ENCODE measurements at regions of chr15 and their contacts with region 1.

Region 1: DNA sequence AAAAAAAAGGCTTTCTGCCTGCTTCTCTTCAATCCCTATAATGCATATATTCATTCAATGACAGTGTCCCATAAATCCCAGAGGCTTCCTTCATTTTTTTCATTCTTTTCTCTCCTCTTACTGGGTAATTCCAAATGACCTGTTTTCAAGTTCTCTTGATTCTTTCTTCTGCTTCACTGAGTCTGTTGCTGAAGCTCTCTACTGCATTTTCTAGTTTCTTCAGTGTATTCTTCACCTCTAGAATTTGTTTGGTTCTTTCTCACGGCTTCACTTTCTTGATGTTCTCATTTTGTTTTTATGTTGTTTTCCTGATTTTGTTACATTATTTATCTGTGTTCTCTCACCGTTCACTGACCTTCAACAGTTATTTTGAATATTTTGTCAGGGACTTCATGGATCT is 141.6 kb downstream of the SCAPER start:
- DNase-seq: no peak
- H3K4me3 ChIP-seq: no peak overlapping the region
- H3K27ac ChIP-seq: no peak overlapping the region
- H3K4me1 ChIP-seq: no peaks in the 10 kb centered on the region
- H3K27me3 ChIP-seq: no peaks in the 10 kb centered on the region
- CTCF ChIP-seq: no peak

Region 2: DNA sequence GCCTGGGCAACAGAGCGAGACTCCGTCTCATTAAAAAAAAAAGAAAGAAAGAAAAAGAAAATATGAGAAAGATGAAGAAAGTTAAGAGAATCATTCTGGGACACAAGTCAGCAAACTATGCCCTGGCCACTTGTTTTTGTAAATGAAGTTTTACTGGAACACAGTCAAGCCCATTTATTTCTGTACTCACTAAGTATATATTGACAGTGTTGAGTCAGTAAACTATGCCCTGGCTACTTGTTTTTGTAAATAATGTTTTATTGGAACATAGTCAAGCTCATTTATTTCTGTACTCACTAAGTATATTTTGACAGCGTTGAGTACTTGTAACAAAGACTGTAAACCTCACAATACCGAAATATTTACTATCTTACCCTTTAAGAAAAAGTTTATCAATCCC is 1269.8 kb before region 1 on chr15:
- CTCF ChIA-PET with region 1: no interaction called
- POLR2A ChIA-PET with region 1: no interaction called
- intact Hi-C with region 1: no loop called
- DNase-seq: no peak
- H3K4me3 ChIP-seq: no peak overlapping the region
- H3K27ac ChIP-seq: no peak overlapping the region
- H3K4me1 ChIP-seq: no peaks in the 10 kb centered on the region
- H3K27me3 ChIP-seq: no peaks in the 10 kb centered on the region
- CTCF ChIP-seq: no peak

Region 3: GRCh38 chr15:77107531-77108355 is 344.2 kb after region 1 on chr15:
- CTCF ChIA-PET with region 1: no interaction called
- POLR2A ChIA-PET with region 1: no interaction called
- intact Hi-C with region 1: no loop called
- DNase-seq: peak in 1 of 2 experiments; percentile 60
- H3K4me3 ChIP-seq: no peak overlapping the region
- H3K27ac ChIP-seq: no peak overlapping the region
- H3K4me1 ChIP-seq: no peaks in the 10 kb centered on the region
- H3K27me3 ChIP-seq: no peaks in the 10 kb centered on the region
- CTCF ChIP-seq: peak; percentile 73

Region 4: DNA sequence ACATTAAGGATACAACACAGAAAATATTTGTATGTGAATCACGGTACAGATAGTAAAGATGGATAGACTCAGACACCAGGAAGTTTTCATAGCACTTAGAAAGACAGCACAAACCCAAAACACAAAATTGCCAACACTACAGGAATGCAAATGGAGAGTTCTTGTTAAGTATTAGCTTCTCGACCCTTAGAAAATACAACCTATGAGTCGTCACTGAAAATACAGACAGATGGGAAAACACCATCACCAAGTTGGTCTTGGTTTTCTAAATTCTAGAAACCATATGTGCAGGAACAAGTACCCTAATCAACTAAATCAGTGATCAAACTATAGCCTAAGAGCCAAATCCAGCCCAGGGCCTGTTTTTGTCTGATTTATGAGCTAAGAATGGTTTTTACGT is 605.6 kb after region 1 on chr15:
- CTCF ChIA-PET with region 1: no interaction called
- POLR2A ChIA-PET with region 1: interaction called, 10 read pairs
- intact Hi-C with region 1: no loop called
- DNase-seq: no peak
- H3K4me3 ChIP-seq: no peak overlapping the region
- H3K27ac ChIP-seq: no peak overlapping the region
- H3K4me1 ChIP-seq: no peaks in the 10 kb centered on the region
- H3K27me3 ChIP-seq: no peaks in the 10 kb centered on the region
- CTCF ChIP-seq: no peak

Measured in PC-9 (cell line).